Lower lobe of right lung (tissue), 2 donors: ENCODE measurements at regions of chr10 and their contacts with region 1.

Region 1: GRCh38 chr10:33330543-33331378 is 3.7 kb downstream of the NRP1 start:
- DNase-seq: peak; percentile 77
- ATAC-seq: peak; percentile 55 to 62
- H3K4me3 ChIP-seq: peak overlapping the region; percentile 79
- H3K27ac ChIP-seq: peak overlapping the region; percentile 48
- H3K4me1 ChIP-seq: peaks cover 54% of the 10 kb centered on the region
- H3K27me3 ChIP-seq: no peaks in the 10 kb centered on the region
- CTCF ChIP-seq: peak; percentile 90

Region 2: GRCh38 chr10:33434933-33435332 is 104.2 kb after region 1 on chr10:
- intact Hi-C with region 1: no loop called
- DNase-seq: no peak
- ATAC-seq: no peak
- H3K4me3 ChIP-seq: no peak overlapping the region
- H3K27ac ChIP-seq: peak overlapping the region; percentile 38
- H3K4me1 ChIP-seq: no peaks in the 10 kb centered on the region
- H3K27me3 ChIP-seq: no peaks in the 10 kb centered on the region
- CTCF ChIP-seq: no peak

Region 3: DNA sequence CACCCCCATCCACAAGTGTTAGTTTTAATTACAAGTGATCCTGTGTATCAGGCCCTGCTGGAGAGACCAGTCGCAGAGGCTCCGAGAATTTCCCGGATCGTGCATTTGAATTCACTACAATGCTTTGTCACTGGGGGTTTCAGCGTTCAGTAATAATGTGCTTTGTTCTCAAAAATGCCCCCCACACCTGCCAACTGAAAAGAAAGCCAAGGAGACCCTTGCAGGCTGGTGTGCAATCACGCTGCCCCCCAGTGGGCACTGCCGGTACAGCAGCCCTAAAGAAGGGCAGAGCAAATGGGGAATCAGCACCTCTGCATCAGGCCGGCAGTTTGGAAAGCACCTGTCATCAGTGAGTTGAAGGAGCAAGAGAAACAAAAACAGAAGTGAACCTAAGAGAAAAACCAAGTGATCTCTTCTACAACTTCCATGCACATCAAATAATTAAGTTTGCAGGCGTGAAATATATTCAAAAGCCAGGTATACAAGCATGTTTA is 1306.7 kb after region 1 on chr10:
- intact Hi-C with region 1: loop called (anchors 5 kb)
- DNase-seq: peak; percentile 63
- ATAC-seq: peak; percentile 81 to 87
- H3K4me3 ChIP-seq: no peak overlapping the region
- H3K27ac ChIP-seq: no peak overlapping the region
- H3K4me1 ChIP-seq: peaks cover 22% of the 10 kb centered on the region
- H3K27me3 ChIP-seq: no peaks in the 10 kb centered on the region
- CTCF ChIP-seq: peak; percentile 96